Gastrocnemius medialis (tissue), 4 donors: ENCODE measurements at regions of chr18 and their contacts with region 1.

Region 1: GRCh38 chr18:830315-830901 is 18.4 kb upstream of the YES1 start:
- DNase-seq: no peak
- ATAC-seq: peak; percentile 66 to 72
- H3K4me3 ChIP-seq: no peak overlapping the region
- H3K27ac ChIP-seq: peak overlapping the region; percentile 21 to 62 (median 48)
- H3K4me1 ChIP-seq: no peaks in the 10 kb centered on the region
- H3K27me3 ChIP-seq: no peaks in the 10 kb centered on the region
- CTCF ChIP-seq: no peak
- POLR2A ChIP-seq: no peak

Region 2: GRCh38 chr18:623761-624620 is 206.4 kb before region 1 on chr18:
- in situ Hi-C with region 1: loop called in 3 of 4 experiments (anchors 5 to 25 kb)
- intact Hi-C with region 1: no loop called
- DNase-seq: peak; percentile 7 to 18
- ATAC-seq: no peak
- H3K4me3 ChIP-seq: no peak overlapping the region
- H3K27ac ChIP-seq: no peak overlapping the region
- H3K4me1 ChIP-seq: no peaks in the 10 kb centered on the region
- H3K27me3 ChIP-seq: no peaks in the 10 kb centered on the region
- CTCF ChIP-seq: peak in 4 of 5 experiments; percentile 24 to 58 (median 40)
- POLR2A ChIP-seq: no peak

Region 3: GRCh38 chr18:731185-731584 is 99.2 kb before region 1 on chr18:
- in situ Hi-C with region 1: no loop called
- intact Hi-C with region 1: no loop called
- DNase-seq: no peak
- ATAC-seq: no peak
- H3K4me3 ChIP-seq: no peak overlapping the region
- H3K27ac ChIP-seq: no peak overlapping the region
- H3K4me1 ChIP-seq: no peaks in the 10 kb centered on the region
- H3K27me3 ChIP-seq: no peaks in the 10 kb centered on the region
- CTCF ChIP-seq: no peak
- POLR2A ChIP-seq: no peak

Region 4: DNA sequence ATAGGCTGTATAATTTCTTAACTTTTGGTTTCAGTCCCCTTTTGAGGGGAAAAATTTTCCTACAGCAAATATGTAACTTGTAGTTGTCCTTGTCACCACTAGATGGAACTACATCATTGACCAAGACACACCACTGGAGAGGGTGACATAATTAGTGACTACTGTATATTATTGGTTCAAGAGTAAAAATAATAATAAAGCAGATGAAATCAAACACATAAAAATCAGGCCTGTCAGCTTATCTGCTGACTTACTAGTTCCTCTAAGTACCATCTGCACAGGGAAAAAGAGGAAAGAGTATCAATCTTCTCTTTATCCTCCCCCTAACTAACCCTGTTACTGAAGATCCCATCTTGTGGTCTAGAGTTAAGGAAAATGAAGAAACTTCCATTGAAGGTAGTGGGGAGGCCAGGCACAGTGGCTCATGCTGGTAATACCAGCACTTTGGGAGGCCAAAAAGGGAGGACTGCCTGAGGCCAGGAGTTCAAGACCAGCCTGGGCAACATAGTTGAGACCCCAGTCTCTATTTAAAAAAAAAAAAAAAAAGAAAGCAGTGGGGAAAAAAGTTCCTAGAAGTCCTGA is 88.4 kb before region 1 on chr18:
- in situ Hi-C with region 1: loop called (anchors 5 to 10 kb)
- intact Hi-C with region 1: loop called (anchors 1 kb)
- DNase-seq: no peak
- ATAC-seq: peak; percentile 70 to 80
- H3K4me3 ChIP-seq: no peak overlapping the region
- H3K27ac ChIP-seq: no peak overlapping the region
- H3K4me1 ChIP-seq: no peaks in the 10 kb centered on the region
- H3K27me3 ChIP-seq: no peaks in the 10 kb centered on the region
- CTCF ChIP-seq: peak; percentile 74 to 81 (median 79)
- POLR2A ChIP-seq: no peak

Region 5: DNA sequence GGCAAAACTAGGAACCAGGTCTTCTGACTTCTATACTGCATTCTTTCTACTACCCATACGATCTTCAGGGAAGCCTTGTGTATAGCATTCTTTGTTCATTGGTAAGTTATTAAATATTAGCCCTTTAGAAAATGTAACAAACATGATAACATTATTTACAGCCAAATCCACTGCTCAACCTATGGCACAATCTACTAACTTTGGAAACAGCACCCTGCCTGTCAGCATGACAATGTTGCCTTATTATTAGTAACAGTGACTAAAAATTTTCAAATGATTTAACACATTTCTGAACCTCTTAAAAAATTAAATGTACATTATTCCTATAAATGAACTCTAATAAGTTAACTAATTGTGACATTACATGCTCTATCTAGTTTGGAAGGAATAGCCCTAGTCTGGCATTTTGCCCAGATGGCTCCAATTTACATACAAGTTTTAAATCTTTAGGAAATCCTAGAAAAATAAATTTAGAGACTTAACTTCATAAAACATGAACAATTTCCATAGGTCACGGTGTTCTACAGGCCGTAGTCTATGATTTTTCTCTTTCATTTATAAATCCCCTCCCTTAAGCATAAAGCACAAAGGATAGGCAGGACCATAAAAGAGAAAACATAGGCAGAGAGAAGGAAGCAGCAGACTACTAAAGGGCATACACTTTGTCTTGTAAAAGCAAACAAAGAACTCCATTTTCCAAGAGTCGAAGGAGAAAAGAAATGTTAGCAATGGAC is 52.0 kb before region 1 on chr18:
- in situ Hi-C with region 1: no loop called
- intact Hi-C with region 1: loop called (anchors 1 kb)
- DNase-seq: no peak
- ATAC-seq: no peak
- H3K4me3 ChIP-seq: no peak overlapping the region
- H3K27ac ChIP-seq: no peak overlapping the region
- H3K4me1 ChIP-seq: peaks cover 10 to 16% of the 10 kb centered on the region in 2 donors
- H3K27me3 ChIP-seq: no peaks in the 10 kb centered on the region
- CTCF ChIP-seq: no peak
- POLR2A ChIP-seq: no peak

Region 6: GRCh38 chr18:1104181-1104881 is 273.9 kb after region 1 on chr18:
- in situ Hi-C with region 1: no loop called
- intact Hi-C with region 1: no loop called
- DNase-seq: no peak
- ATAC-seq: no peak
- H3K4me3 ChIP-seq: no peak overlapping the region
- H3K27ac ChIP-seq: no peak overlapping the region
- H3K4me1 ChIP-seq: no peaks in the 10 kb centered on the region
- H3K27me3 ChIP-seq: no peaks in the 10 kb centered on the region
- CTCF ChIP-seq: no peak
- POLR2A ChIP-seq: no peak